ENCODE measurements at regions of chr20 and their contacts with region 1.

Region 1: GRCh38 chr20:23441850-23442313 is 2.4 kb downstream of the CSTL1 start:
- DNase-seq: peak; percentile 82
- ATAC-seq: peak; percentile 92
- H3K4me3 Mint-ChIP-seq: no peak overlapping the region
- H3K27ac Mint-ChIP-seq: no peak overlapping the region
- H3K4me1 Mint-ChIP-seq: no peaks in the 10 kb centered on the region
- H3K27me3 Mint-ChIP-seq: no peaks in the 10 kb centered on the region
- CTCF ChIP-seq: peak; percentile 74

Region 2: DNA sequence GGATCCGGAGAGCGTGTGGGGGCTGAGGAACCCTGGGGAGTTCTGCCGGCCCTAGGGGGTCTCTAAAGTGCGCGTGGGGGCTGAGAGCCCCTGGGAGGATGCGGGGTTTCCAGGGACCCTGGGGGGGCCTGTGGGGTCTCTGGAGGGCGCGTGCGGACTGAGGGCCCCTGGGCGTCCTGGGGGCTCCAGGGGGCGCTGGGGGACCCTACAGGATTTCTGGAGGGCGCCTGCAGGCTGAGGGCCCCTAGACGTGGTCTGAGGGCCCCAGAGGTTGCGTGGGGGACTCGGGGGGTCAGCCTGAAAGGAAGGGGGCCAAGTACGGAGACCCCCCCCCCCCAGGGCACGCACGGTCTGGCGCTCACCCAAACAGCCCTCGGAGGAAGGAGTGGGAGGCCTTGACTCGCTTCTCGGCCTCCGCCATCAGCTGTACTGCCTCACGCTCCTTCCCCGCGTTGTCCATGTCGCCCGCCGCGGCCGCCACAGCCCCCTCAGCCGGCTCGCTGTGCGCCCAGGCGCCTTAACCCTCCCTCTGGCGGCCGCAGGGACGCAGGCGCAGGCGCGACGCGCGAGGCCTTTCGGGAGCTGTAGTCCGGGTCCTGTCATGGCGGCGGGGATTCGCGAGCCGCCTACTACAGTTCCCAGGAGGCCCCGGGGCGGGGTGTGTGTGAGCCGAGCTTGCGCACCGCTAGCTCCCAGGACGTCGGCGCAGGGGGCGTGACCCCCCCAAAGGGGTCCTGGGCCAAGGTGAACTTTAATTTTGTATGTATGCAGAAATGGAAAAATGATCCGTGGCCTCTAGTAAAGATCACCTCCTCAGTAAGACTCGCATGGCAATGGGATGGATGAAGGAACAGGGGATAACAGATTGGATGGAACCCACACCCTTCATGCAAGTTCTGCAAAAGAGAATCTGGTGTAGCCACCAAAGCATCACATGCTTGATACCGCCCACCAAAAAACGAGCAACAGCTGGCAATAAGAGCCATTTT is 20.6 kb before region 1 on chr20 and contains the start of gene NAPB:
- CTCF ChIA-PET with region 1: interaction called, 12 read pairs
- POLR2A ChIA-PET with region 1: no interaction called
- intact Hi-C with region 1: no loop called
- DNase-seq: peak; percentile 96
- ATAC-seq: peak; percentile 98
- H3K4me3 Mint-ChIP-seq: peak within 1 kb of the TSS; percentile 93
- H3K27ac Mint-ChIP-seq: peak within 1 kb of the TSS; percentile 80
- H3K4me1 Mint-ChIP-seq: peaks cover 62% of the 10 kb centered on the region
- H3K27me3 Mint-ChIP-seq: no peaks in the 10 kb centered on the region
- CTCF ChIP-seq: peak; percentile 43
- total RNA-seq, gene NAPB: 14.3 to 16.8 TPM

Region 3: GRCh38 chr20:23451956-23452487 is 10.1 kb after region 1 on chr20:
- CTCF ChIA-PET with region 1: interaction called, 13 read pairs
- POLR2A ChIA-PET with region 1: no interaction called
- intact Hi-C with region 1: no loop called
- DNase-seq: no peak
- ATAC-seq: no peak
- H3K4me3 Mint-ChIP-seq: no peak overlapping the region
- H3K27ac Mint-ChIP-seq: no peak overlapping the region
- H3K4me1 Mint-ChIP-seq: peaks cover 31% of the 10 kb centered on the region
- H3K27me3 Mint-ChIP-seq: no peaks in the 10 kb centered on the region
- CTCF ChIP-seq: no peak

Region 4: GRCh38 chr20:23606652-23607049 is 164.8 kb after region 1 on chr20:
- CTCF ChIA-PET with region 1: interaction called, 176 read pairs
- POLR2A ChIA-PET with region 1: interaction called, 3 read pairs
- intact Hi-C with region 1: loop called (anchors 1 kb)
- DNase-seq: peak; percentile 85
- ATAC-seq: peak; percentile 98
- H3K4me3 Mint-ChIP-seq: no peak overlapping the region
- H3K27ac Mint-ChIP-seq: no peak overlapping the region
- H3K4me1 Mint-ChIP-seq: peaks cover 4% of the 10 kb centered on the region
- H3K27me3 Mint-ChIP-seq: no peaks in the 10 kb centered on the region
- CTCF ChIP-seq: peak; percentile 81

Region 5: GRCh38 chr20:23759306-23759940 is 317.5 kb after region 1 on chr20:
- CTCF ChIA-PET with region 1: no interaction called
- POLR2A ChIA-PET with region 1: no interaction called
- intact Hi-C with region 1: no loop called
- DNase-seq: no peak
- ATAC-seq: no peak
- H3K4me3 Mint-ChIP-seq: no peak overlapping the region
- H3K27ac Mint-ChIP-seq: no peak overlapping the region
- H3K4me1 Mint-ChIP-seq: no peaks in the 10 kb centered on the region
- H3K27me3 Mint-ChIP-seq: peaks cover 9% of the 10 kb centered on the region
- CTCF ChIP-seq: no peak